Transverse colon (tissue), 4 donors: ENCODE measurements at regions of chr4 and their contacts with region 1.

Region 1: DNA sequence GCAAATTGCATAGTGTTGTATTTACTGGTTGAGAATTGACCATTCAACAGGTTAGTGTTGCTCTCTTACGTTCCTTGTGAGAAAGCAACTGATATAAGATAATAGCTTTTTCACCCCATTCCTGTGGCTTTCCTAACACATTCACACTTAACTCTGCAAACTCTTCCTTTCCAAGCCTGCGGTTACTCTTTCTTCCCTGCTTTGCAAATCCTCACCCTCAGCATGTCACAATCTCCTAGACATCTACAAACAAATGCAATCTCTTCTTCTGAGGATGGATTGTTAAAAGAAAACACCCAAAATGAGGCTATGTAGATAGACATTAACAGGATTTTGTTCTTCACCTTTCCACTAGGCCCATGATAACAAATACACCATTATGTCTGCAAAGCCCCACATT is 771.7 kb upstream of the PCDH7 start:
- DNase-seq: no peak
- H3K4me3 ChIP-seq: no peak overlapping the region
- H3K27ac ChIP-seq: no peak overlapping the region
- H3K4me1 ChIP-seq: no peaks in the 10 kb centered on the region
- H3K27me3 ChIP-seq: no peaks in the 10 kb centered on the region
- CTCF ChIP-seq: no peak
- EP300 ChIP-seq: no peak
- POLR2A ChIP-seq: no peak

Region 2: GRCh38 chr4:28287837-28288236 is 1660.6 kb before region 1 on chr4:
- in situ Hi-C with region 1: no loop called
- intact Hi-C with region 1: loop called (anchors 5 kb)
- DNase-seq: no peak
- H3K4me3 ChIP-seq: no peak overlapping the region
- H3K27ac ChIP-seq: no peak overlapping the region
- H3K4me1 ChIP-seq: no peaks in the 10 kb centered on the region
- H3K27me3 ChIP-seq: no peaks in the 10 kb centered on the region
- CTCF ChIP-seq: no peak
- EP300 ChIP-seq: no peak
- POLR2A ChIP-seq: no peak

Region 3: DNA sequence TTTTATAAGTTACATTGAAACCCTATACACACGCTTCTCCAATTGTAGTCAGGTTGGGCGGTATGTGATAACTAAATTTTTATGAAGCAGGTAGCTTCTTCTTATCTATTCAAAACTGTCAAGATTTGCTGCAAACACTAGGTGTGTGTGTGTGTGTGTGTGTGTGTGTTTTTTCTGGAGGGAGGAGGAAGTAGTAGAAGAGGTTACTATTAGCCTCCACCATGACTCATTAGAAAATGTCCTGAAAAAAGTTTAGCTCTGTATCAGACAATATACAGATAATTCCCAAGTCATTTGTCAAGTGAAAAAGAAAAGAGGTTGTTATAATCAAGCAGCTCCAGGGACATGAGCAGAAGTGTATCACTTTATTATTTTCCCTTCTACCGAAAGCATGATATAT is 805.6 kb after region 1 on chr4:
- in situ Hi-C with region 1: no loop called
- intact Hi-C with region 1: no loop called
- DNase-seq: no peak
- H3K4me3 ChIP-seq: no peak overlapping the region
- H3K27ac ChIP-seq: peak overlapping the region in 1 of 4 donors; percentile 10
- H3K4me1 ChIP-seq: peaks cover 0 to 5% (median 0%) of the 10 kb centered on the region in 4 donors
- H3K27me3 ChIP-seq: no peaks in the 10 kb centered on the region
- CTCF ChIP-seq: no peak
- EP300 ChIP-seq: no peak
- POLR2A ChIP-seq: no peak